ENCODE measurements at regions of chr11 and their contacts with region 1.

Region 1: GRCh38 chr11:86218125-86219084 is 26.1 kb upstream of the EED start:
- DNase-seq: peak; percentile 73
- H3K4me3 Mint-ChIP-seq: peak overlapping the region; percentile 70
- H3K27ac Mint-ChIP-seq: peak overlapping the region; percentile 37
- H3K4me1 Mint-ChIP-seq: peaks cover 51% of the 10 kb centered on the region
- H3K27me3 Mint-ChIP-seq: no peaks in the 10 kb centered on the region

Region 2: GRCh38 chr11:86041975-86042378 is 176.4 kb before region 1 on chr11:
- CTCF ChIA-PET with region 1: interaction called, 26 read pairs
- POLR2A ChIA-PET with region 1: interaction called, 3 read pairs
- DNase-seq: peak; percentile 52
- H3K4me3 Mint-ChIP-seq: no peak overlapping the region
- H3K27ac Mint-ChIP-seq: peak overlapping the region; percentile 1
- H3K4me1 Mint-ChIP-seq: peaks cover 67% of the 10 kb centered on the region
- H3K27me3 Mint-ChIP-seq: no peaks in the 10 kb centered on the region

Region 3: DNA sequence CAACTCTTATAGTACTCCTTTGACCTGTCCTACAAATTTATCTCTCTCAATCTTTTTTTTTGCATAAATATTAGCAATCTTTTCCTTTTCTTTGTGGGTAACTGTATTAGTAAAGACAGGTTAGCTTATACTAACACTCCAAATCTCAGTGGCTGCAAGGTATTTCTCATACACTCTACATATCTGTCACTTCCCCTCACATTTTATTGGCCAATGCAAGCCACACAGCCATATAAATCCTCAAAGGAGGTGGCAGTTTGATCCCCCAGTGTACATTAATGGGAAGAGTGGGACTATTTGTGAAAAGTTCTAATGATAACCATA is 16.4 kb before region 1 on chr11:
- CTCF ChIA-PET with region 1: interaction called, 11 read pairs
- POLR2A ChIA-PET with region 1: interaction called, 6 read pairs
- DNase-seq: peak; percentile 31
- H3K4me3 Mint-ChIP-seq: no peak overlapping the region
- H3K27ac Mint-ChIP-seq: no peak overlapping the region
- H3K4me1 Mint-ChIP-seq: peaks cover 16% of the 10 kb centered on the region
- H3K27me3 Mint-ChIP-seq: no peaks in the 10 kb centered on the region

Region 4: DNA sequence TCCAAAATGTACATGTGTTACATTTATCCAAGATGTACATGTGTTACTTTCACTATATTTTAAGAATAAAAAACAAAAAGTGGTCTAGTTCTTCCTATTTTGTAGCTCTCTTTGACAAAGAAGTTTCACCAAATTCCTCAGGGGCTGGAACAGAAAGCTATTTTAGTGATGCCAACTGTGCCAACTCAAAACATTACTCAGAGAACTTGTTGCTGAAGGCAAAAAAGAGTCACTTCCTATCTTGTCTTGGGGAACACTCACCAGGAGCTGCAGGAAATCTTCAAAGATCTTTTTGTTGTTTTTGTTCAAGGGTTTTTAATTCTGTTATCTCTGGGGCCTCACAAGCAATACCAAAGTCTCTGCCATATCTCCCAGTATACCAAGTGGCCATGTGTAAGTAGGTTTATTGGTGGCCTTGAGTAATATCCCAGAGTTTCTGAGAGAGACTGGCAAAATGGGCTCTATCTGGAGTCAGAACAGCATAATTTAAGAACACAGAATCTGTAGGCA is 12.6 kb after region 1 on chr11:
- CTCF ChIA-PET with region 1: interaction called, 13 read pairs
- POLR2A ChIA-PET with region 1: interaction called, 7 read pairs
- DNase-seq: no peak
- H3K4me3 Mint-ChIP-seq: no peak overlapping the region
- H3K27ac Mint-ChIP-seq: no peak overlapping the region
- H3K4me1 Mint-ChIP-seq: peaks cover 38% of the 10 kb centered on the region
- H3K27me3 Mint-ChIP-seq: no peaks in the 10 kb centered on the region